ENCODE measurements at regions of chr14 and their contacts with region 1.

Region 1: GRCh38 chr14:55026793-55027561 is at the starts of genes SOCS4 and WDHD1:
- DNase-seq: peak; percentile 84
- ATAC-seq: peak; percentile 96
- H3K4me3 ChIP-seq: peak within 1 kb of the TSS; percentile 81 to 82
- H3K27ac ChIP-seq: peak within 1 kb of the TSS; percentile 61
- H3K4me1 ChIP-seq: peaks cover 3 to 22% of the 10 kb centered on the region in 2 experiments; a peak in 3 of 4 replicates
- H3K27me3 ChIP-seq: no peaks in the 10 kb centered on the region
- CTCF ChIP-seq: no peak
- POLR2A ChIP-seq: peak; percentile 39
- RAD21 ChIP-seq: 0 out of 2 replicates have a peak, but pooled peaks have one; percentile 2
- total RNA-seq, gene SOCS4: 23.7 TPM
- total RNA-seq, gene WDHD1: 44.3 TPM

Region 2: DNA sequence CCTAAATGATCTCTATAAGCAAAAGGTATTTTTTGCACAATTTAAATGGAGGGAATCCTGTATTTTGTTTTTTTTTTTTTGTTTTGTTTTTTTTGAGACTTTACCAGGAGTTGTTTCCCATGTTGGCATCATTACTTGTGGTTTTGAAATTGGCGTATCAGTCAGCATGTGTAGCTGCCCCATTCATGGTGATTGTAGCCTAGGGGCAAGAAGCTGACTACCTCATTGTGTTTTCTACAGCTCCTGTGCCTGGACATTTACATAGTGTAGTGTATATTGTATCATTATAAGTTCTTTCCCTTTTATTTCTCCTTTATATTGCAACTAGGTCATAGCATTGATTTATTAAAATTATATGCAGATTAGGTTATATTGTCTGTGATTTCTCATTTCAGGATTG is 435.5 kb before region 1 on chr14:
- CTCF ChIA-PET with region 1: no interaction called
- POLR2A ChIA-PET with region 1: no interaction called
- RAD21 ChIA-PET with region 1: no interaction called
- intact Hi-C with region 1: no loop called
- DNase-seq: no peak
- ATAC-seq: no peak
- H3K4me3 ChIP-seq: no peak overlapping the region
- H3K27ac ChIP-seq: no peak overlapping the region
- H3K4me1 ChIP-seq: peaks cover 0 to 29% of the 10 kb centered on the region in 2 experiments; a peak in 2 of 4 replicates
- H3K27me3 ChIP-seq: no peaks in the 10 kb centered on the region
- CTCF ChIP-seq: no peak
- POLR2A ChIP-seq: no peak
- RAD21 ChIP-seq: no peak

Region 3: GRCh38 chr14:55000381-55000780 is 26.6 kb before region 1 on chr14:
- CTCF ChIA-PET with region 1: no interaction called
- POLR2A ChIA-PET with region 1: no interaction called
- RAD21 ChIA-PET with region 1: no interaction called
- intact Hi-C with region 1: no loop called
- DNase-seq: no peak
- ATAC-seq: no peak
- H3K4me3 ChIP-seq: no peak overlapping the region
- H3K27ac ChIP-seq: no peak overlapping the region
- H3K4me1 ChIP-seq: no peaks in the 10 kb centered on the region
- H3K27me3 ChIP-seq: no peaks in the 10 kb centered on the region
- CTCF ChIP-seq: no peak
- POLR2A ChIP-seq: no peak
- RAD21 ChIP-seq: no peak

Region 4: GRCh38 chr14:55051426-55052268 is 24.7 kb after region 1 on chr14 and contains the start of gene MAPK1IP1L:
- CTCF ChIA-PET with region 1: interaction called, 10 read pairs
- POLR2A ChIA-PET with region 1: interaction called, 11 read pairs
- RAD21 ChIA-PET with region 1: no interaction called
- intact Hi-C with region 1: no loop called
- DNase-seq: peak; percentile 63
- ATAC-seq: peak; percentile 89
- H3K4me3 ChIP-seq: peak within 1 kb of the TSS; percentile 66 to 97
- H3K27ac ChIP-seq: peak within 1 kb of the TSS; percentile 99
- H3K4me1 ChIP-seq: peaks cover 4 to 21% of the 10 kb centered on the region in 2 experiments; a peak in 3 of 4 replicates
- H3K27me3 ChIP-seq: no peaks in the 10 kb centered on the region
- CTCF ChIP-seq: peak; percentile 92 to 99 (median 96)
- POLR2A ChIP-seq: peak; percentile 96
- RAD21 ChIP-seq: peak; percentile 78
- total RNA-seq, gene MAPK1IP1L: 101 TPM